ENCODE measurements at regions of chr19 and their contacts with region 1.

Region 1: DNA sequence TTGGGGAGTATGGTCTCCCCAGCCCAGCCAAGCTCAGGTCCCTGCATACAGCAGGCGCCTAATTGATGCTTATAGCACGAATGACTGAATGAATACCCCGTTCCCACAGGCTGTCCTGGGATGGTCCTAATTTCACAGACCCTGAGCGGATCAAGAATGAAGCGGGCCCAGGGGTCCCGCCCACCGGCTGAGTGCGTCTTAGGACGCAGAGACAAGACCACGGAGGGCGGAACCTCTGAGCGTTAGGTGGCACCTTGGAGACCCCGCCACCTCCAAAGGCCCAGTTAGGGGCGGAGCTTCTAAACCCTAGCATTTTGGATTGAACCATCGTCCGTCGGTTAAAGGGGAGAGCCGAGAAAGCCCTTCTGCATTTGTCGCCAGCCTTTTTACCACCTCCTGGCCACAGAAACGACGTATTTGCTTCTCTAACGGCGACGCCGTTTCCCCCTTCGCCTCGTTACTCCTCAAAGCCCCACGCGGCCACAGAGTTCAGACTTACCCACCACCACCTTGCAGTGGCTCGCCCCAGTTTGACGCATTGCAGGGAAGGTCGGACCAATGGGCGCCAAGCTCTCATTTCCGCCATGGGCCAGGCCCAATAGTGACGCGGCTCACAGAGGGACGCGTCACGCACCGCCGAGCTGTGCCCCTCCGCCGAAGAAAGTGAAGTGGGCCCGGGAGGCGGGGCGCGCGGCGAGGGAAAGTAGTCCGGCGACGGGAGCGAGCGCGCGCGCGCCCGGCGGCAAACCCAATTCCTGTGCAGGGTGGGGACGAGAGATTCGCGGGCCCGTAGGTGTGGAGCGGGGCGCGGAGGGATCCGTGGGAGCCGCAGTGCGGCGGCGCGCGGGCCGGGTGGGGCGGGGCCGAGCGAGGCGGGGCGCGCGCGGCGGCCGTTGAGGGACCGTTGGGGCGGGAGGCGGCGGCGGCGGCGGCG is 479 bp upstream of the CALM3 start:
- DNase-seq: peak; percentile 96 to 99 (median 98)
- ATAC-seq: peak; percentile 91
- H3K4me3 ChIP-seq: peak overlapping the region; percentile 69
- H3K4me3 Mint-ChIP-seq: peak overlapping the region; percentile 95 to 100 (median 98)
- H3K27ac ChIP-seq: peak overlapping the region; percentile 99
- H3K27ac Mint-ChIP-seq: peak overlapping the region; percentile 100
- H3K4me1 ChIP-seq: peaks cover 15 to 30% of the 10 kb centered on the region in 2 donors
- H3K4me1 Mint-ChIP-seq: peaks cover 27 to 57% (median 46%) of the 10 kb centered on the region in 7 donors
- H3K27me3 ChIP-seq: no peaks in the 10 kb centered on the region
- H3K27me3 Mint-ChIP-seq: peaks cover 0 to 10% (median 0%) of the 10 kb centered on the region in 5 donors

Region 2: GRCh38 chr19:46520616-46521015 is 80.0 kb before region 1 on chr19:
- CTCF ChIA-PET with region 1: interaction called, 3 read pairs
- POLR2A ChIA-PET with region 1: interaction called, 16 read pairs
- intact Hi-C with region 1: no loop called
- DNase-seq: no peak
- ATAC-seq: no peak
- H3K4me3 ChIP-seq: no peak overlapping the region
- H3K4me3 Mint-ChIP-seq: peak overlapping the region in 5 of 10 donors; percentile 29 to 66 (median 59)
- H3K27ac ChIP-seq: peak overlapping the region; percentile 54
- H3K27ac Mint-ChIP-seq: peak overlapping the region in 8 of 9 donors; percentile 21 to 98 (median 79)
- H3K4me1 ChIP-seq: peaks cover 9 to 60% of the 10 kb centered on the region in 2 donors
- H3K4me1 Mint-ChIP-seq: peaks cover 21 to 93% (median 82%) of the 10 kb centered on the region in 7 donors
- H3K27me3 ChIP-seq: no peaks in the 10 kb centered on the region
- H3K27me3 Mint-ChIP-seq: peaks cover 0 to 3% (median 0%) of the 10 kb centered on the region in 5 donors

Region 3: GRCh38 chr19:46614114-46614722 is 13.6 kb after region 1 on chr19:
- CTCF ChIA-PET with region 1: interaction called, 13 read pairs
- POLR2A ChIA-PET with region 1: interaction called, 112 read pairs
- intact Hi-C with region 1: loop called (anchors 1 kb)
- DNase-seq: peak in 8 of 9 donors; percentile 70 to 83 (median 77)
- ATAC-seq: peak; percentile 79
- H3K4me3 ChIP-seq: no peak overlapping the region
- H3K4me3 Mint-ChIP-seq: peak overlapping the region; percentile 40 to 77 (median 71)
- H3K27ac ChIP-seq: peak overlapping the region; percentile 65
- H3K27ac Mint-ChIP-seq: peak overlapping the region; percentile 79 to 93 (median 89)
- H3K4me1 ChIP-seq: peaks cover 24 to 84% of the 10 kb centered on the region in 2 donors
- H3K4me1 Mint-ChIP-seq: peaks cover 55 to 85% (median 77%) of the 10 kb centered on the region in 7 donors
- H3K27me3 ChIP-seq: no peaks in the 10 kb centered on the region
- H3K27me3 Mint-ChIP-seq: no peaks in the 10 kb centered on the region

Region 4: GRCh38 chr19:46661020-46661731 is 60.5 kb after region 1 on chr19 and contains the start of gene DACT3:
- CTCF ChIA-PET with region 1: interaction called, 17 read pairs
- POLR2A ChIA-PET with region 1: interaction called, 22 read pairs
- intact Hi-C with region 1: loop called (anchors 1 kb)
- DNase-seq: peak; percentile 98 to 100 (median 99)
- ATAC-seq: peak; percentile 92
- H3K4me3 ChIP-seq: peak within 1 kb of the TSS; percentile 71
- H3K4me3 Mint-ChIP-seq: peak within 1 kb of the TSS; percentile 80 to 93 (median 86)
- H3K27ac ChIP-seq: peak within 1 kb of the TSS; percentile 65
- H3K27ac Mint-ChIP-seq: peak within 1 kb of the TSS; percentile 76 to 96 (median 91)
- H3K4me1 ChIP-seq: peaks cover 14 to 20% of the 10 kb centered on the region in 2 donors
- H3K4me1 Mint-ChIP-seq: peaks cover 7 to 26% (median 20%) of the 10 kb centered on the region in 7 donors
- H3K27me3 ChIP-seq: peaks cover 6 to 10% of the 10 kb centered on the region in 2 donors
- H3K27me3 Mint-ChIP-seq: peaks cover 9 to 42% (median 18%) of the 10 kb centered on the region in 5 donors
- total RNA-seq, gene DACT3: 0.11 to 1.3 (median 0.34) TPM in 4 of 5 experiments, not detected in the other

Region 5: GRCh38 chr19:46746281-46747013 is 145.8 kb after region 1 on chr19 and contains the start of gene STRN4:
- CTCF ChIA-PET with region 1: no interaction called
- POLR2A ChIA-PET with region 1: interaction called, 4 read pairs
- intact Hi-C with region 1: loop called (anchors 1 to 5 kb)
- DNase-seq: peak in 8 of 9 donors; percentile 29 to 65 (median 50)
- ATAC-seq: peak; percentile 87
- H3K4me3 ChIP-seq: peak within 1 kb of the TSS; percentile 73
- H3K4me3 Mint-ChIP-seq: peak within 1 kb of the TSS; percentile 84 to 97 (median 90)
- H3K27ac ChIP-seq: peak within 1 kb of the TSS; percentile 91
- H3K27ac Mint-ChIP-seq: peak within 1 kb of the TSS; percentile 74 to 94 (median 87)
- H3K4me1 ChIP-seq: peaks cover 21 to 26% of the 10 kb centered on the region in 2 donors
- H3K4me1 Mint-ChIP-seq: peaks cover 43 to 64% (median 58%) of the 10 kb centered on the region in 7 donors
- H3K27me3 ChIP-seq: no peaks in the 10 kb centered on the region
- H3K27me3 Mint-ChIP-seq: no peaks in the 10 kb centered on the region
- total RNA-seq, gene STRN4: 81.3 to 120 (median 90.4) TPM

Region 6: GRCh38 chr19:46850228-46851203 is 249.9 kb after region 1 on chr19 and contains the start of gene AP2S1:
- CTCF ChIA-PET with region 1: no interaction called
- POLR2A ChIA-PET with region 1: no interaction called
- intact Hi-C with region 1: loop called (anchors 2 to 10 kb)
- DNase-seq: peak; percentile 73 to 98 (median 93)
- ATAC-seq: peak; percentile 97
- H3K4me3 ChIP-seq: peak within 1 kb of the TSS; percentile 89
- H3K4me3 Mint-ChIP-seq: peak within 1 kb of the TSS; percentile 87 to 99 (median 93)
- H3K27ac ChIP-seq: peak within 1 kb of the TSS; percentile 79
- H3K27ac Mint-ChIP-seq: peak within 1 kb of the TSS; percentile 68 to 96 (median 83)
- H3K4me1 ChIP-seq: peaks cover 9 to 12% of the 10 kb centered on the region in 2 donors
- H3K4me1 Mint-ChIP-seq: peaks cover 20 to 34% (median 29%) of the 10 kb centered on the region in 7 donors
- H3K27me3 ChIP-seq: no peaks in the 10 kb centered on the region
- H3K27me3 Mint-ChIP-seq: peaks cover 0 to 3% (median 0%) of the 10 kb centered on the region in 5 donors
- total RNA-seq, gene AP2S1: 34.4 to 116 (median 46.5) TPM

Region 7: GRCh38 chr19:47608074-47608918 is 1007.6 kb after region 1 on chr19:
- CTCF ChIA-PET with region 1: no interaction called
- POLR2A ChIA-PET with region 1: interaction called, 4 read pairs
- intact Hi-C with region 1: loop called in 1 of 2 experiments (anchors 5 kb)
- DNase-seq: peak; percentile 91 to 99 (median 96)
- ATAC-seq: peak; percentile 96
- H3K4me3 ChIP-seq: peak overlapping the region; percentile 79
- H3K4me3 Mint-ChIP-seq: peak overlapping the region; percentile 70 to 95 (median 86)
- H3K27ac ChIP-seq: peak overlapping the region; percentile 96
- H3K27ac Mint-ChIP-seq: peak overlapping the region; percentile 61 to 92 (median 88)
- H3K4me1 ChIP-seq: peaks cover 16 to 22% of the 10 kb centered on the region in 2 donors
- H3K4me1 Mint-ChIP-seq: peaks cover 12 to 36% (median 28%) of the 10 kb centered on the region in 7 donors
- H3K27me3 ChIP-seq: no peaks in the 10 kb centered on the region
- H3K27me3 Mint-ChIP-seq: peaks cover 0 to 2% (median 0%) of the 10 kb centered on the region in 5 donors